HepG2 (cell line): ENCODE measurements at regions of chr1 and their contacts with region 1.

Region 1: GRCh38 chr1:244272471-244273261 is 179.0 kb downstream of the ADSS2 start:
- DNase-seq: peak; percentile 70
- ATAC-seq: peak; percentile 79
- H3K4me3 ChIP-seq: no peak overlapping the region
- H3K27ac ChIP-seq: no peak overlapping the region
- H3K4me1 ChIP-seq: peaks cover 15% of the 10 kb centered on the region
- H3K27me3 ChIP-seq: 0 out of 5 replicates have a peak, but pooled peaks cover 0 to 8% of the 10 kb centered on the region in 2 experiments
- CTCF ChIP-seq: peak; percentile 94
- EP300 ChIP-seq: no peak
- POLR2A ChIP-seq: no peak
- RAD21 ChIP-seq: peak; percentile 83

Region 2: GRCh38 chr1:243343970-243344937 is 928.4 kb before region 1 on chr1:
- CTCF ChIA-PET with region 1: interaction called, 12 read pairs
- POLR2A ChIA-PET with region 1: no interaction called
- in situ Hi-C with region 1: loop called (anchors 5 kb)
- intact Hi-C with region 1: loop called (anchors 1 kb)
- DNase-seq: peak; percentile 43
- ATAC-seq: peak; percentile 46; the same call in 2 of the 3 replicates
- H3K4me3 ChIP-seq: no peak overlapping the region
- H3K27ac ChIP-seq: no peak overlapping the region
- H3K4me1 ChIP-seq: no peaks in the 10 kb centered on the region
- H3K27me3 ChIP-seq: no peaks in the 10 kb centered on the region; a peak in 1 of 5 replicates
- CTCF ChIP-seq: peak; percentile 73
- EP300 ChIP-seq: no peak
- POLR2A ChIP-seq: no peak
- RAD21 ChIP-seq: peak; percentile 51; the same call in 1 of the 2 replicates

Region 3: DNA sequence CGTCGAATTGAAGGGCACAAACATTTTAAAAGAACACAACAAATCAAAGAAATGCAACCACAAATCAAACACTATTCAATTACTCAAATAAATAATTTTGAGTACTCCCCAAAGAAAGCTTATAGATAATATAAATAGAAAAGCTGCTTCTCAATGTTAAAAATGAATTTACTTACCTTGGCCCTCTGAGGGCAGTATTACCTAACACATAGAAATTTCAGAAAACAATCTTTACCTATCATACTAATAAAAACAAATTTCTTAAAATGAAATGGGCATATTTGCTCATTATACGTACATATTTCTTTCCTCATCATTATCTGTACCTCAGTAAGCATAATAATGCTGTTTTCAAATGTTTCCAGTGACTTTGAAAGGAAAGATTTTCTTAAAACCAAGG is 564.5 kb before region 1 on chr1:
- CTCF ChIA-PET with region 1: interaction called, 7 read pairs
- POLR2A ChIA-PET with region 1: no interaction called
- in situ Hi-C with region 1: loop called (anchors 10 kb)
- intact Hi-C with region 1: loop called (anchors 1 kb)
- DNase-seq: no peak
- ATAC-seq: no peak
- H3K4me3 ChIP-seq: no peak overlapping the region
- H3K27ac ChIP-seq: no peak overlapping the region
- H3K4me1 ChIP-seq: peaks cover 8% of the 10 kb centered on the region
- H3K27me3 ChIP-seq: no peaks in the 10 kb centered on the region
- CTCF ChIP-seq: no peak
- EP300 ChIP-seq: no peak
- POLR2A ChIP-seq: no peak
- RAD21 ChIP-seq: no peak

Region 4: GRCh38 chr1:243713470-243714186 is 559.0 kb before region 1 on chr1:
- CTCF ChIA-PET with region 1: interaction called, 5 read pairs
- POLR2A ChIA-PET with region 1: no interaction called
- in situ Hi-C with region 1: loop called (anchors 10 kb)
- intact Hi-C with region 1: loop called (anchors 1 kb)
- DNase-seq: no peak
- ATAC-seq: no peak
- H3K4me3 ChIP-seq: no peak overlapping the region
- H3K27ac ChIP-seq: no peak overlapping the region
- H3K4me1 ChIP-seq: peaks cover 9% of the 10 kb centered on the region
- H3K27me3 ChIP-seq: no peaks in the 10 kb centered on the region
- CTCF ChIP-seq: no peak
- EP300 ChIP-seq: no peak
- POLR2A ChIP-seq: no peak
- RAD21 ChIP-seq: no peak

Region 5: DNA sequence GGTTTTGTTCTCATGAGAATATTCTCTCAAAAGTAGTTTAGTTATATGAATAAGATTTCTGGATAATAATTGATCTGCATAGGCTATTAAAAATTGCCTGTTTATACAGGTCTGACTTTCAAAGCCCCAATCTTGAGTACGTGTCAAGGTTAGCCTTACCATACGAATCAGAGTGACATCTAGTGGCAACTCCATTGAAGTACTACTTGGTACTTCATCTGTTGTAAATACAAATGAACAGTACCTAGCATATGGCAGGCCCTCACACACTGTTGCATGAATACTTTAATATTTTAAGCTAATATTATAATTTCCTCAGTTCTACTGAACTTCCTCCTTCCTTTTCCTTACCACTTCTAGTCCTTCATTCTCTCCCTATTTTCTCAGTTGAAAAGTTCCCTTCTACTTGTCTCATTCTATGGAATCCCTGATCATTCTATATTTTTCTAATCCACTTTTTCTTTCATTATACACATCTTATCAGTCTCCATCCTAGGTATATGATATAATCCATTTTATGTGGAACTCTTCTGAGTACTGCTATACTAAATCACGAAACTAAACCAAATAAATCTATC is 523.9 kb before region 1 on chr1:
- CTCF ChIA-PET with region 1: interaction called, 8 read pairs
- POLR2A ChIA-PET with region 1: no interaction called
- in situ Hi-C with region 1: no loop called
- intact Hi-C with region 1: loop called (anchors 1 kb)
- DNase-seq: peak; percentile 49
- ATAC-seq: peak; percentile 92
- H3K4me3 ChIP-seq: no peak overlapping the region
- H3K27ac ChIP-seq: no peak overlapping the region
- H3K4me1 ChIP-seq: no peaks in the 10 kb centered on the region
- H3K27me3 ChIP-seq: no peaks in the 10 kb centered on the region
- CTCF ChIP-seq: peak; percentile 79
- EP300 ChIP-seq: no peak
- POLR2A ChIP-seq: no peak
- RAD21 ChIP-seq: no peak

Region 6: GRCh38 chr1:244012202-244012601 is 260.5 kb before region 1 on chr1:
- CTCF ChIA-PET with region 1: interaction called, 15 read pairs
- POLR2A ChIA-PET with region 1: no interaction called
- in situ Hi-C with region 1: loop called (anchors 5 kb)
- intact Hi-C with region 1: loop called (anchors 1 kb)
- DNase-seq: no peak
- ATAC-seq: no peak
- H3K4me3 ChIP-seq: no peak overlapping the region
- H3K27ac ChIP-seq: no peak overlapping the region
- H3K4me1 ChIP-seq: no peaks in the 10 kb centered on the region
- H3K27me3 ChIP-seq: peaks cover 0 to 21% of the 10 kb centered on the region in 2 experiments; a peak in 3 of 5 replicates
- CTCF ChIP-seq: no peak
- EP300 ChIP-seq: no peak
- POLR2A ChIP-seq: no peak
- RAD21 ChIP-seq: no peak

Region 7: DNA sequence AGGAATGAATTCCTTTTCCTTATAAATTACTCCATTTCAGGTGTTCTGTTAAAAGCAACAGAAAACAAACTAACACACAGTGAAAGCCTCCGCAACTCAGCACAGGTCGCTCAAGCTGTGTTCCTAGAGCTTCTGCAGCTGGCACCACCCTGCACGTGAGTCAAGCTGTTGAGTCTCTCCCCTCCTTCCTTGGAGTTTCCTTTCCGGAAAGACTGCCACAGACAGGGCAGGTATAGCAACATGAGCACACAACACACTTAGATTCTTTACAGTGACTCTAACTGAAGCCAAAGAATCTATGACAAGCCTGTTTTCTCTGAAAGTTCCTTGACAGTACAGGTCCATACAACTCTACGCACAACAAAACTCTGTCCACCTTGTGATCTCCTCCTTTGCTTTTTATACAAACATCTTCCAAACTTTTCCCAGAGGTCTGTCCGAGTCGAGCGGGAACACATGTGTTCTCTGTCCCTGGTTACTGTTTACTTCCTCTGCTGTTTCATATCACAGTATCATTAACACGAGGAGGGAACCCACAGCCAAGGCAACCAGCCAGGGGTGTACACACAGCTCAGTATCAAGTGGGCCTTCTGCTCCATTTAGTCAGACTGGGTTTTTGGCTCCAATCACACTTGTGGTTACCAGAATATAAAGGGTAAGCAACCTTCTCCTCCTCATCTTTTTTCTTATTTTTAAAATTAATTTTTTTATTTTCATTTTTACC is 341.6 kb after region 1 on chr1:
- CTCF ChIA-PET with region 1: no interaction called
- POLR2A ChIA-PET with region 1: no interaction called
- in situ Hi-C with region 1: no loop called
- intact Hi-C with region 1: no loop called
- DNase-seq: no peak
- ATAC-seq: no peak
- H3K4me3 ChIP-seq: no peak overlapping the region
- H3K27ac ChIP-seq: no peak overlapping the region
- H3K4me1 ChIP-seq: no peaks in the 10 kb centered on the region
- H3K27me3 ChIP-seq: peaks cover 0 to 7% of the 10 kb centered on the region in 2 experiments; a peak in 1 of 5 replicates
- CTCF ChIP-seq: no peak
- EP300 ChIP-seq: no peak
- POLR2A ChIP-seq: no peak
- RAD21 ChIP-seq: no peak